ENCODE measurements at regions of chr6 and their contacts with region 1.

Region 1: GRCh38 chr6:53986165-53986720 is 125.0 kb upstream of the MLIP start:
- DNase-seq: peak; percentile 84
- H3K4me3 ChIP-seq: no peak overlapping the region
- H3K27ac ChIP-seq: no peak overlapping the region
- H3K4me1 ChIP-seq: peaks cover 29% of the 10 kb centered on the region
- H3K27me3 ChIP-seq: no peaks in the 10 kb centered on the region
- CTCF ChIP-seq: peak; percentile 93

Region 2: DNA sequence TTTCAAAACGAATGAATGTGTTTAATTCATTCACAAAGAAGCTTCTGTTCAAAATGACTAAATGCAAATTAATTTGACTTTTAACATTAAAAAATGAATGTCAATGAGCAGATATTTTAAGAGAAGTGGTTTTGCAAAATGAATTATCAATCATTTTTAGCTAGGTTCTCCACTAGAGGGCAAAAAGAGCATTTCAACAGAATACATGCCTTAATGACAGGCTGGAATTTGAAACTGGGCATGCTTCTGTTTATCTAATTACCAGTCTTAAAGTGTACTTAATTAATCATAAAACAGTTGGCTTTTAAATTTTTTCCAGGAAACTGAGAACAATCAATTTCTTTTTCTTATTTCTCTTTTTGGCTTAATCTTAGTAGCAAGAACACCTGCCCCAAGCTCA is 258.2 kb after region 1 on chr6:
- CTCF ChIA-PET with region 1: no interaction called
- POLR2A ChIA-PET with region 1: no interaction called
- intact Hi-C with region 1: loop called (anchors 5 kb)
- DNase-seq: peak; percentile 49
- H3K4me3 ChIP-seq: no peak overlapping the region
- H3K27ac ChIP-seq: no peak overlapping the region
- H3K4me1 ChIP-seq: peaks cover 14% of the 10 kb centered on the region
- H3K27me3 ChIP-seq: no peaks in the 10 kb centered on the region
- CTCF ChIP-seq: peak; percentile 74

Region 3: DNA sequence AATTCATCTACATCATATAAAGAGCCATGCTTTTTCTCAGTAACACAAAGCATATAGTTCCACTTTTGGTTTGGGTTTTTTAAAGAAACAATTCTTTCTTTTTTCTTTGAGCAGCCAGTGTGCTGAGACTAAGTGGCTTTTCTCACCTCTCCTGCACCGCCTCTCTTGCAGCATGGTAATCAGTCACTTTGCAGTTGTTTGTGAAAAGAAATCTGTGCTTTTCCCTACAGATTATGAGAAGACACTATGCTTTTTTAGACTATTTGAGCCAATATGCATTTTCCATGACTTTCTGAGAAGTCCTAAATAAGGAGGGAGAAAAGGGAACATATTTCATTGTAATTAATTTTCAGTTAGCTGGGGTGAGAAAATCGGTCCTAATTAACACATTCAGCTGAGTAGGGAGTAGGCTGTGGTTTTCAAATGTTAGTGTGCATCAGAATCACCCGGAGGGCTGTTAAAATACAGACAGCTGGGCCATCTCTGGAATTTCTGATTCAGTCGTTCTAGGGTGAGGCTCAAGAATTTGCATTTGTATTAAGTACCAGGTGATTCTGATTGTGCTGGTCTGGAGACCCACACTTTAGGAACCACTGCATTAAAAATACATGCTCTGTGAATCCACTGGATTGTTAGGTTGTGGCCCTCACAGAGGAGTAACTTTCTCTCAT is 477.2 kb after region 1 on chr6:
- CTCF ChIA-PET with region 1: interaction called, 4 read pairs
- POLR2A ChIA-PET with region 1: no interaction called
- intact Hi-C with region 1: loop called (anchors 1 kb)
- DNase-seq: no peak
- H3K4me3 ChIP-seq: no peak overlapping the region
- H3K27ac ChIP-seq: peak overlapping the region; percentile 58
- H3K4me1 ChIP-seq: peaks cover 31% of the 10 kb centered on the region
- H3K27me3 ChIP-seq: no peaks in the 10 kb centered on the region
- CTCF ChIP-seq: no peak

Region 4: GRCh38 chr6:55069132-55069781 is 1083.0 kb after region 1 on chr6:
- CTCF ChIA-PET with region 1: interaction called, 4 read pairs
- POLR2A ChIA-PET with region 1: no interaction called
- intact Hi-C with region 1: loop called (anchors 5 kb)
- DNase-seq: peak; percentile 71
- H3K4me3 ChIP-seq: no peak overlapping the region
- H3K27ac ChIP-seq: no peak overlapping the region
- H3K4me1 ChIP-seq: no peaks in the 10 kb centered on the region
- H3K27me3 ChIP-seq: no peaks in the 10 kb centered on the region
- CTCF ChIP-seq: peak; percentile 85

Measured in A673 (cell line).